ENCODE measurements at regions of chr11 and their contacts with region 1.

Region 1: DNA sequence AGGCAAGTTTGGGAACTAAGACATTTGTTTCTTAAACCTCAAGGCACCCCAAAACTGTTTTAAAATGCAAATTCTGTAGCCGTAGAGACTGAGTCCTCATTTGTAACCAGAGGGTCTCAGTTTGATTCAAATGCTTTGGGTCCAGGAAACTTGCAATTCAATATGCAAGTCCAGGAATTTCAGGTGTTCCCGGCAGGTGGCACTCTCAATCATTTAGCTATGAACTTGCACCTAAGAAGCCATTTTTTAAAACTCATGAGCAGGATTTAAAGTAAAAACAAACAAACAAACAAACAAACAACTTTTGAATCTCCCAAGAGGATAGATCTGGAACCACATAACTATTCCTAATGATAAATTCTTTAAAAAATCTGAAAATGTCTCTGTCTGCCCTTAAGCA is 8.7 kb upstream of the ABTB2 start:
- DNase-seq: no peak
- H3K4me3 ChIP-seq: no peak overlapping the region
- H3K27ac ChIP-seq: no peak overlapping the region
- H3K4me1 ChIP-seq: peaks cover 6% of the 10 kb centered on the region
- H3K27me3 ChIP-seq: no peaks in the 10 kb centered on the region

Region 2: GRCh38 chr11:33996498-33997454 is 369.7 kb before region 1 on chr11:
- in situ Hi-C with region 1: loop called (anchors 10 kb)
- DNase-seq: peak; percentile 87
- H3K4me3 ChIP-seq: peak overlapping the region; percentile 17; the same call in 1 of the 2 replicates
- H3K27ac ChIP-seq: no peak overlapping the region
- H3K4me1 ChIP-seq: no peaks in the 10 kb centered on the region
- H3K27me3 ChIP-seq: peaks cover 10% of the 10 kb centered on the region; the same call in 1 of the 2 replicates

Region 3: DNA sequence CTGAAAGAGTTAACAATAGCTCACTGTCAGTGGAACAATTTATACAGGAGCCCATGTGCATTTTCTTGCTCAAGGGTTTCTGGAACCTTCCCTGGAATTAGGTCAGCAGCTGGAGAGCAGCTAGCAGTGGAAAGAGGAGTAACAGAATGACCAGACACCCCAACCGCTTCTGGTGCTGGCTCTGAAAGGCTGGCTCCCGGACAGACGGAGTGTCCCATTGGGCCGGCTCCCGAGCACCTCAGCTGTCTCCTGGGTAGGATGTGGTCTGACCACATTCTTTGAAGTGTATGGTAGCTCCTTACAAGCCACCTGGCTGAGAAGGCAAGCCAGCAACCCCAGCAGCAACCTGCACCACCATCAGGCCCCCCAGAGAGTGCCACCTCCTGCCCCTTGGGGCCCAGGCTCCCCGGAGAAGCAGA is 53.4 kb before region 1 on chr11:
- in situ Hi-C with region 1: no loop called
- DNase-seq: peak; percentile 20
- H3K4me3 ChIP-seq: no peak overlapping the region
- H3K27ac ChIP-seq: no peak overlapping the region
- H3K4me1 ChIP-seq: peaks cover 38% of the 10 kb centered on the region
- H3K27me3 ChIP-seq: no peaks in the 10 kb centered on the region

Region 4: GRCh38 chr11:34480314-34480713 is 113.8 kb after region 1 on chr11:
- in situ Hi-C with region 1: loop called (anchors 5 kb)
- DNase-seq: peak; percentile 24
- H3K4me3 ChIP-seq: no peak overlapping the region
- H3K27ac ChIP-seq: no peak overlapping the region
- H3K4me1 ChIP-seq: 0 out of 2 replicates have a peak, but pooled peaks cover 4% of the 10 kb centered on the region
- H3K27me3 ChIP-seq: peaks cover 12% of the 10 kb centered on the region